ENCODE measurements at regions of chr15 and their contacts with region 1.

Region 1: GRCh38 chr15:57213862-57214261 is 162.4 kb upstream of the CGNL1 start:
- DNase-seq: peak; percentile 85
- H3K4me3 ChIP-seq: peak overlapping the region; percentile 18
- H3K27ac ChIP-seq: peak overlapping the region; percentile 54
- H3K4me1 ChIP-seq: peaks cover 74% of the 10 kb centered on the region
- H3K27me3 ChIP-seq: no peaks in the 10 kb centered on the region
- CTCF ChIP-seq: peak; percentile 67

Region 2: DNA sequence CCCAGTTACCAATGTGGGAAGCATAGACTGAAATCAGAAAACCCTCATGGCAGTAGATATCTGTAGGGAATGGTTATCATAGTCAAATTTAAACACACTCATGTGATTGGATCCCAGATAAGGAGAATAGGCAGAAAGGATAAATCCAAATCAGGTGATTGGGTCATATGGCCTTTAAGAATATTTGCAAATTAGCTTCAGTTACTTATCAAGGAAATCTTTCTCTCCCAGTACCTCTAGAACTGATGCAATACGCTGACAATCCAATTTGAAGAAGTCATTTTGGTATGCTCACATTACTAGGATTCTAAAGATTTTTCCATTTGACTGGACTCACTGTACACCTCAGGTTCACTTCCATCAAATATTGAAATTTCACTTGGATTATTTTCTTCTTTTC is 661.2 kb before region 1 on chr15:
- CTCF ChIA-PET with region 1: no interaction called
- POLR2A ChIA-PET with region 1: no interaction called
- intact Hi-C with region 1: no loop called
- DNase-seq: no peak
- H3K4me3 ChIP-seq: no peak overlapping the region
- H3K27ac ChIP-seq: no peak overlapping the region
- H3K4me1 ChIP-seq: no peaks in the 10 kb centered on the region
- H3K27me3 ChIP-seq: no peaks in the 10 kb centered on the region
- CTCF ChIP-seq: no peak

Region 3: GRCh38 chr15:57017024-57017423 is 196.8 kb before region 1 on chr15:
- CTCF ChIA-PET with region 1: no interaction called
- POLR2A ChIA-PET with region 1: no interaction called
- intact Hi-C with region 1: loop called (anchors 5 kb)
- DNase-seq: peak; percentile 58
- H3K4me3 ChIP-seq: no peak overlapping the region
- H3K27ac ChIP-seq: no peak overlapping the region
- H3K4me1 ChIP-seq: peaks cover 37% of the 10 kb centered on the region
- H3K27me3 ChIP-seq: no peaks in the 10 kb centered on the region
- CTCF ChIP-seq: peak; percentile 44

Measured in A673 (cell line).